IMR-90 (cell line): ENCODE measurements at regions of chr15 and their contacts with region 1.

Region 1: GRCh38 chr15:64067564-64068030 is 21.3 kb upstream of the DAPK2 start:
- DNase-seq: peak; percentile 44
- ATAC-seq: peak; percentile 78
- H3K4me3 ChIP-seq: no peak overlapping the region
- H3K27ac ChIP-seq: no peak overlapping the region
- H3K4me1 ChIP-seq: peaks cover 10% of the 10 kb centered on the region
- H3K27me3 ChIP-seq: no peaks in the 10 kb centered on the region
- CTCF ChIP-seq: peak; percentile 83
- POLR2A ChIP-seq: no peak
- RAD21 ChIP-seq: peak; percentile 89

Region 2: DNA sequence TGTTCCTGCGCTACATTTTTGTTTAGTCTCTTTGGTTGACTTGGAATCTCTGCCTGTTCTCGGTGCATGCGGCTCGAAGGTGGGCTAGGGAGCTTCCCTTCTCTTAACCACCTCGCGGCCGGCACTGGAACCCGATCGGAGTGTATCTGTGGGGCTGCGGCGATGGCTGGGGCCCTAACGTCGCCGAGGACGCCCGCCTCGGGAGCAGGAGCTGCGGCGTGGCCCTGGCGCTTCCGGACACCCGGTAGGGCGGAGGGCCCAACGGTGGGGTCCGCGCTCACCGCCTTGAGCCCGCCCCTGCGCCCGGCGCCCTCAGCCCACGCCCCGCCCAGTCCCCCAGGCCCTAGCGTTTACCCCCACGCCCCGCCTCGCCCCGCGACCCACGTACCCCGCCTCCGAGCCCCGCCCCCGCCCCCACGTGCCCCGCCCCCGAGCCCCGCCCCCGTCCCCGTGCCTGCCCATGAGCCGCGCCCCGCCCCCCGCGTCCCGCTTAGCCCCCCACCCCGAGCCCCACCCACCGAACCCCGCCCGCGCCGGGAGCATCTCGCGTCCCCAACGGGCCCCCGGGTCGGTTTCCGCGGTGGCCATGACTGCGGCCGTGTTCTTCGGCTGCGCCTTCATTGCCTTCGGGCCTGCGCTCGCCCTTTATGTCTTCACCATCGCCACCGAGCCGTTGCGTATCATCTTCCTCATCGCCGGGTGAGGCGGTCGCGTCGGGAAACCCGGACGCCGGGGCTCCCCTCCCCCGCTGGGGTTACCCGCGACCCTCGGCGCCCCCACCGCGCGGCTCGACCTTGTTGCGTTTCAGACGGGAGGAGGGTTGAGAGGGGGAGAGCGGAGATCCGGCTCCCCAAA is 790.3 kb before region 1 on chr15 and contains the start of gene APH1B:
- CTCF ChIA-PET with region 1: no interaction called
- POLR2A ChIA-PET with region 1: no interaction called
- dilution Hi-C with region 1: no loop called
- in situ Hi-C with region 1: loop called (anchors 25 kb)
- intact Hi-C with region 1: no loop called
- DNase-seq: peak; percentile 48
- ATAC-seq: peak; percentile 92
- H3K4me3 ChIP-seq: peak within 1 kb of the TSS; percentile 92
- H3K27ac ChIP-seq: peak within 1 kb of the TSS; percentile 86
- H3K4me1 ChIP-seq: peaks cover 3% of the 10 kb centered on the region; the same call in 1 of the 2 replicates
- H3K27me3 ChIP-seq: no peaks in the 10 kb centered on the region
- CTCF ChIP-seq: no peak
- POLR2A ChIP-seq: no peak
- RAD21 ChIP-seq: no peak
- total RNA-seq, gene APH1B: 7.7 and 10.6 TPM in 2 replicates

Region 3: DNA sequence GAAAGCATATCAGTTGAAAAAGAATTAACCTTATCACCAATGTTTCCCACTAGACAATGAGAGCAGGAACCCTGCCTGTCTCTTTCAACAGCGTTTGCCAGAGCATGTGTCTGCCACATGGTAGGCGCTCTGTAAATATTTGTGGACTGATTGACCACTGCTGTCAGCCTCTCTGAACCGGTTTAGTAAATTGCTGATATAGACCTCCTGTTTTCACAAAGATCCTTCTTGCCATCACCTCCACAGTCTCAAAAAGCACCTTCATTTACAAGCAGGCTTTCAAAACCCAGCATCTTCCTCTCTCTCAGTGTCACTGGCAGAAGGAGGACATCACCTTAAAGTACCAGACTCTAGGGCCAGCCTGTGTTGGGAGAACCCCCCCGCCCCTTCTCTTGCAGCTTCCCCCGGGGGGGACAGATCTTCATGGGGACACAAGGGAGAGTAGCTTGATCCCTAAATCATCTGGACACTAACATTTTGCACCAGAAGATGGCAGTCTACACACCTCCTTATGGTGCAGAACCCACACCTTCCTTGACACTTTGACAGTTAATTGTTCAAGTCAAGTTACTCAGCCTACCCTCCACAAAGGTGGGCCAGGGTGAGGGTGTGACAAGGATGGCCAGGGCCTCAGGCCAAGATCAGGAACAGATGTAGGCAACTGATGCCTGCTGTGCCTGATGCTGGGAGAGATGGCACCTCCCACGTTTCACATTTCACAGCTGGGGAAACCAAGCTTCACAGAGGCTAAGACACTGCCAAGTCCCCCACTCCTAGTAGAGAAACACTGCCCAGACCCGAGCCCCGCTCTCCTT is 601.0 kb before region 1 on chr15:
- CTCF ChIA-PET with region 1: no interaction called
- POLR2A ChIA-PET with region 1: no interaction called
- dilution Hi-C with region 1: no loop called
- in situ Hi-C with region 1: no loop called
- intact Hi-C with region 1: loop called (anchors 10 kb)
- DNase-seq: peak; percentile 70
- ATAC-seq: peak; percentile 78
- H3K4me3 ChIP-seq: no peak overlapping the region
- H3K27ac ChIP-seq: no peak overlapping the region
- H3K4me1 ChIP-seq: peaks cover 16% of the 10 kb centered on the region
- H3K27me3 ChIP-seq: peaks cover 4% of the 10 kb centered on the region
- CTCF ChIP-seq: peak; percentile 69
- POLR2A ChIP-seq: 0 out of 2 replicates have a peak, but pooled peaks have one; percentile 33
- RAD21 ChIP-seq: peak; percentile 81

Region 4: DNA sequence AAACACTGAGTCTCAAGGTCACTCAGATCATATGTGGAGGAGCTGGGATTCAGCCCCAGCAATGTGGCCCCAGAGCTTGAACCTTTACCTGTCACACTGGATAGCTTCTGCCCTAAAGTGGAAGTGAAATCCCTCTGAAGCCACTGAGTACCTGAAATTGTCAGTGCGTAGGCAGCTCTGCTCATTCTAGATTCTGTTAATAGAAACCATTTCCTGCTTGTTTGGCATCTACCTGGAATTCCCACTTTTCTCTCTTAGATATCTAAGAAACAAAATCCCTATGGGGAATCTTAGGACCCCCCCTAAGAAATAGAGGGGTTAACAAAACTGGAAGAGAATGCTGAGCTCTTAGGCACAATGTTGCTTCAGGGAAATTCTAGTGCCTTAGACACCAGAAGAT is 440.6 kb before region 1 on chr15:
- CTCF ChIA-PET with region 1: interaction called, 3 read pairs
- POLR2A ChIA-PET with region 1: no interaction called
- dilution Hi-C with region 1: no loop called
- in situ Hi-C with region 1: loop called (anchors 25 kb)
- intact Hi-C with region 1: no loop called
- DNase-seq: no peak
- ATAC-seq: no peak
- H3K4me3 ChIP-seq: no peak overlapping the region
- H3K27ac ChIP-seq: no peak overlapping the region
- H3K4me1 ChIP-seq: peaks cover 9% of the 10 kb centered on the region
- H3K27me3 ChIP-seq: no peaks in the 10 kb centered on the region
- CTCF ChIP-seq: no peak
- POLR2A ChIP-seq: no peak
- RAD21 ChIP-seq: no peak

Region 5: DNA sequence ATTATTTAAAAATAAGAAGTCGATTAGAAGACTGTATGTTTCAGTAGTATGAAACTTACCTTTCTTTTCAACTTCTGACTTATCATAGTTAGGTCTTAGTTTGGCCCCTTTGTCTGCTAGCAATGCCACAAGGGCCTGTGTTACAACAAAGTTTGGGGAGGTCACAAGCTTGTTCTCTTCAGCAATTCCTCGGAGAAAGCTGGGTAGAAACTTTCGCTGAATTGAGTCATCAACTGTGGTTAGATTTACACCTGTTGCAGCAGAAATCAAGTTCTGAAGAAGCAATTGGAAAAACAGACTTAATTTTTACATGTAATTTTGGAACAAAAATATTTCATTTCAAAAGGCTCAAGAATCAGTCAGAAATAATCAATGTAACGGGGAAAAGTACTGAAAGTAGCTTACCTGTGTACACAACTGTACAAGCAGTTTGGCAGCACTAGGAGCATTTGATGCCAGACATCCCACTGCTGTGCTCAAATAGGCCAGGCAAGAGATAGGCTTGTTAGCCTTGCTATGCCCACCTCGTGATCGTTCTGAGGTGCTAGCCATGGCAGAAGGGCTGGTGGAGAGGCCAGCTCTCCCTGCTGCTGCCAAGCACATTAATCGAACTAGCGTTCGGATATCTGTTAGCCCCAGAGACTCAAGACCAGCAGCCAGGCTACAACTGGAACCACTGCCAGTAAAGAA is 411.8 kb before region 1 on chr15:
- CTCF ChIA-PET with region 1: no interaction called
- POLR2A ChIA-PET with region 1: no interaction called
- dilution Hi-C with region 1: no loop called
- in situ Hi-C with region 1: no loop called
- intact Hi-C with region 1: no loop called
- DNase-seq: no peak
- ATAC-seq: no peak
- H3K4me3 ChIP-seq: no peak overlapping the region
- H3K27ac ChIP-seq: no peak overlapping the region
- H3K4me1 ChIP-seq: no peaks in the 10 kb centered on the region
- H3K27me3 ChIP-seq: no peaks in the 10 kb centered on the region
- CTCF ChIP-seq: no peak
- POLR2A ChIP-seq: no peak
- RAD21 ChIP-seq: no peak

Region 6: GRCh38 chr15:63826528-63826927 is 241.1 kb before region 1 on chr15:
- CTCF ChIA-PET with region 1: no interaction called
- POLR2A ChIA-PET with region 1: no interaction called
- dilution Hi-C with region 1: no loop called
- in situ Hi-C with region 1: no loop called
- intact Hi-C with region 1: loop called (anchors 1 kb)
- DNase-seq: peak; percentile 48
- ATAC-seq: no peak
- H3K4me3 ChIP-seq: no peak overlapping the region
- H3K27ac ChIP-seq: no peak overlapping the region
- H3K4me1 ChIP-seq: no peaks in the 10 kb centered on the region
- H3K27me3 ChIP-seq: no peaks in the 10 kb centered on the region
- CTCF ChIP-seq: peak; percentile 35
- POLR2A ChIP-seq: no peak
- RAD21 ChIP-seq: peak; percentile 45; the same call in 1 of the 2 replicates

Region 7: GRCh38 chr15:63998489-63998888 is 69.1 kb before region 1 on chr15:
- CTCF ChIA-PET with region 1: no interaction called
- POLR2A ChIA-PET with region 1: no interaction called
- dilution Hi-C with region 1: no loop called
- in situ Hi-C with region 1: no loop called
- intact Hi-C with region 1: no loop called
- DNase-seq: no peak
- ATAC-seq: no peak
- H3K4me3 ChIP-seq: no peak overlapping the region
- H3K27ac ChIP-seq: no peak overlapping the region
- H3K4me1 ChIP-seq: peaks cover 7% of the 10 kb centered on the region; the same call in 1 of the 2 replicates
- H3K27me3 ChIP-seq: peaks cover 25% of the 10 kb centered on the region
- CTCF ChIP-seq: no peak
- POLR2A ChIP-seq: no peak
- RAD21 ChIP-seq: no peak

Region 8: DNA sequence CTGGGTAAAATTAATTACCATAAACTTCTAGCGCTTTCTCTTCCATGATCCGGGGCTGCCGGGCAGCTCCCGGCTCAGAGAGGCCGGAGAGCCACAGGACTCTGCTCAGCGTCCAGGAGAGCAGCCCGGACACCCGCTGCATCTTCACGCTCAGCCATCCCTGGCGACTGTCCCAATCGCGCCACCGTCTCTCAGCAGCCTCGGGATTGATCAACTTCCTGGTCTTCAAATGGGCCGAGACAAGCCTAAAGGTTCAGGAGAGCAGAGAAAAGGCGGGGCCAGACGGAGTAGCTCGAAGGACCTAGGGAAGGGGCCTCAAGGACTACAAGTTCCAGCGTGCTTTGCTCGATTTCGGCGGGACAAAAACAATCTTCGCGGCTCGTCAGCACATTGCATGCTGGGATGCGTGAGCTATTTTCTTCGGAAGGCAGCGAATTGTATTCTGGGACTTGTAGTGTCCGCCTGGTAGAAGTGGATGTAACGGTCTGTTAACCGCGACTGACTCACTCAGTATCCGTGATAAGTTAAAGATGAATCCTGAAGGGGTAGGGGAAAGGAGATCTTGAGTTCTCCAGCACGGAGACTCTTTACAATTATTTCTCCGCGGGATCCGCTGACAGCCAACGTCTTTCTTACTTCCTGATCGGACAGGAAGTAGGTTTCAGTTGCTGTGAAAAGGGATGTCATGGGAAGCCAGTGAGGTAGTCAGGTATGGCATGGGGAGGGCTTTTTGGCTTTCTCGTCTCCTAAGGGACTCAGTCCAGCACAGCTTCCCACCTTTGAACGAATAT is 26.2 kb after region 1 on chr15 and contains the start of gene CIAO2A:
- CTCF ChIA-PET with region 1: no interaction called
- POLR2A ChIA-PET with region 1: no interaction called
- dilution Hi-C with region 1: no loop called
- in situ Hi-C with region 1: no loop called
- intact Hi-C with region 1: no loop called
- DNase-seq: peak; percentile 98
- ATAC-seq: peak; percentile 78
- H3K4me3 ChIP-seq: peak within 1 kb of the TSS; percentile 71
- H3K27ac ChIP-seq: peak within 1 kb of the TSS; percentile 85
- H3K4me1 ChIP-seq: 0 out of 2 replicates have a peak, but pooled peaks cover 1% of the 10 kb centered on the region
- H3K27me3 ChIP-seq: no peaks in the 10 kb centered on the region
- CTCF ChIP-seq: no peak
- POLR2A ChIP-seq: peak; percentile 75
- RAD21 ChIP-seq: no peak
- total RNA-seq, gene CIAO2A: 36.7 and 69.4 TPM in 2 replicates

Region 9: DNA sequence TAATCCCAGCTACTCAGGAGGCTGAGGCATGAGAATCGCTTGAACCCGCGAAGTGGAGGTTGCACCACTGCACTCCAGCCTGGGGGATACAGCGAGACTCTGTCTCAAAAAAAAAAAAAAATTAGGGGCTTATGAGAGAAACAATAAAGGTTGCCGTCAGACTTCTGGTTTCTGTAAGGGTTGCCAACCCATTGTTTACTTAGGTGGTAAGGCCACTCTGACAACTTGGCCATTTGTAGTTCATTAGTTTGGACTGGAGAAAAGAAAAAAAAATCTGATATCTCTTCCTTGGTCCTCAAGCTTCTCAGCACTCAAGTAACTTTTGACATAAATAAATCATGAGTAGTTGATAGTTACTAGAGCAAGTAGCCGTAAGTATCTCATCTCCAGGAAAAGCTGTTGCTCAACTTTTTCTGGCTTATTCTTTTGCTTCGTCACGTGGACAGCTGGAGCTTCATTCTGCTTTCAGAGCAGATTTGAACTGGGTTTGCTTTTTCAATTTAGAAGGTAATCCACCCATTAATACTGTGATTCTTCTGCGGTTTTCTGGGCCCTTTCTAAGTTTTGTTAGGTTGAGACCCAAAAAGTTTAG is 37.6 kb after region 1 on chr15:
- CTCF ChIA-PET with region 1: no interaction called
- POLR2A ChIA-PET with region 1: no interaction called
- dilution Hi-C with region 1: no loop called
- in situ Hi-C with region 1: no loop called
- intact Hi-C with region 1: no loop called
- DNase-seq: peak; percentile 57
- ATAC-seq: peak; percentile 35; the same call in 1 of the 2 replicates
- H3K4me3 ChIP-seq: no peak overlapping the region
- H3K27ac ChIP-seq: peak overlapping the region; percentile 29; the same call in 1 of the 2 replicates
- H3K4me1 ChIP-seq: no peaks in the 10 kb centered on the region
- H3K27me3 ChIP-seq: no peaks in the 10 kb centered on the region
- CTCF ChIP-seq: no peak
- POLR2A ChIP-seq: no peak
- RAD21 ChIP-seq: no peak